Activated T-helper 2 cell treated with anti-CD3 and anti-CD28 coated beads, Interferon-gamma antibody, Interleukin-2, Interleukin-4, amounts not matched to agents 10 μg/mL and 5 μg/mL and 100 μg/mL, durations not matched to agents 14 hours and 24 hours and 36 hours (primary cell): ENCODE measurements at regions of chr17 and their contacts with region 1.

Region 1: GRCh38 chr17:18038861-18039534 is at the starts of genes ATPAF2 and GID4:
- DNase-seq: peak; percentile 100
- H3K4me3 Mint-ChIP-seq: peak within 1 kb of the TSS; percentile 92
- H3K27ac Mint-ChIP-seq: peak within 1 kb of the TSS; percentile 87
- H3K4me1 Mint-ChIP-seq: peaks cover 34% of the 10 kb centered on the region
- H3K27me3 Mint-ChIP-seq: no peaks in the 10 kb centered on the region
- total RNA-seq, gene ATPAF2: 29.9 and 31.3 TPM in 2 replicates
- total RNA-seq, gene GID4: 9.3 and 10.8 TPM in 2 replicates

Region 2: DNA sequence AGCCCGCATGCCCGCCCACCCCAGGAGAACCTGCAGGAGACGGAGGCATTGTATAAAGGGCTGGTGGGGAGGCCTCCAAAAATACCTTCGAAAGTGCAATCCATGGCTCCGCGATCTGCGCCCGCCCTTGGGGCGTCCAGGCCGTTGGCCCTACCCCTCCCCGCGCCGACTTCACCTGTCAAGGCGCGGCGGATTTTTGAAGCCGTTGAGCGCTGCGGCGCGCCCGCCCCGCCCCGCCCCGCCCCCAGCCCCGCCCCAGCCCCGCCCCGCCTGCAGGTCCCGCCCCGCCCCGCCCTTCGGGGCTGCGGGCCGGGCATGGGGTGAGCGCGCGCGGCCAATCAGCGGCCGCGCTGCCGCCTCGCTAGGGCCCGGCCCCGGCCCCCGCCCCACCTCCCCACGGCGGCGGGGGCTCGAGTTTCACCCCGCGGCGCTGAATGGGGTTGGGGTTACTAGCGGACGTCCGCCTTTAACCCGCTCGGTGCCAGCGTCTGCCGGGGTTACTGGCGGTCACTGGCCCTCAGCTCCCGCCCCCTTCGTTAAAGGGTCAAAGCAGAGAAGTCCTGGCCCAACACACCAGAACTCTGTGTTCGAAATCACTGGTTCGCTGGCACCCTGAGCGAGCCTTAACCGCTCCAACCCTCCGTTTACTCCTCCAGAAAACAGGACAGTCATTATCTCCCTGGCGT is 215.4 kb before region 1 on chr17:
- intact Hi-C with region 1: loop called (anchors 5 kb)
- DNase-seq: peak; percentile 82
- H3K4me3 Mint-ChIP-seq: peak overlapping the region; percentile 77
- H3K27ac Mint-ChIP-seq: peak overlapping the region; percentile 94
- H3K4me1 Mint-ChIP-seq: peaks cover 81% of the 10 kb centered on the region
- H3K27me3 Mint-ChIP-seq: no peaks in the 10 kb centered on the region

Region 3: DNA sequence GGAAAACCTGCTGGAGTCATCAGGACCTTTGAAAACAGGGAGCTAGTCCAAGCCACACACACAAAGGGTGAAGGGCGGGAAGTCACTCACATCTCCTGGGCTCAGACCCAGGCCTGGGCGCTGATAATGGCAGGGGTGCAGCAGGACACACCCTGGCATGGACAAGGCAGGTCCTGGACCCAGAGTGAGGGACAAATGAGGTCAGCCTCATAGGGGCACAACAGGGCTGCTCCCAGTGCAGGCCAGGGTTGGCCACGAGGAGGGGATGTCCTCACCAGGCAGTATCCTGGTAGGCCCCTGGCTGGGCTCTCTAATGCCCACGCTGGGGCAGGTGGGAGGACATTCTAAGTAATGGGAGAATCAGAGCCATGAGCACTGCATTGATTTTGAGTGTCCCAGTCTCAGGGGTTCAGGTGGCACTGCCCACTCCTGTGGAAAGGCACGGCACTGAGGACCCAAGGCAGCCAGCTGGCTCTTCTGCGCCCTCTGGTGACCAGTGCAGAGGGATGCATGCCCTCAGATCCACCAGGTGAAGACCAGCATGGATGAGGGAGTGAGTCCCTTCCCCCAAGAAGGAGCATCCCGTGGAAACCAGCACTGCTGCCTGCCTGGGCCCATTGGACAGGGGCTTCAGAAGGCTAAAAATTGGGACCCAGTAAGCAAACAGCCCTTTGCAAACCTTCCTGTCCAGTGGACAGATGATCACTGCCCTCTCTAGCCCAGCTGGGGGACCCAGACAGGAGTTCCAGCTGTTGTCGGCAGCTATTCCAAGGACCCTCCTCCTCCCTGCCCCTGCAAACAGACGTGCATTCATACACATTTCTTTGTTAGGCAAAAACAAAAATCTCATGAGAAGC is 178.9 kb before region 1 on chr17:
- intact Hi-C with region 1: loop called (anchors 10 kb)
- DNase-seq: peak; percentile 50
- H3K4me3 Mint-ChIP-seq: no peak overlapping the region
- H3K27ac Mint-ChIP-seq: no peak overlapping the region
- H3K4me1 Mint-ChIP-seq: peaks cover 20% of the 10 kb centered on the region
- H3K27me3 Mint-ChIP-seq: no peaks in the 10 kb centered on the region

Region 4: GRCh38 chr17:17959520-17960361 is 79.3 kb before region 1 on chr17:
- intact Hi-C with region 1: loop called (anchors 5 kb)
- DNase-seq: no peak
- H3K4me3 Mint-ChIP-seq: peak overlapping the region; percentile 86
- H3K27ac Mint-ChIP-seq: peak overlapping the region; percentile 99
- H3K4me1 Mint-ChIP-seq: peaks cover 52% of the 10 kb centered on the region
- H3K27me3 Mint-ChIP-seq: no peaks in the 10 kb centered on the region

Region 5: GRCh38 chr17:17972126-17972951 is 66.7 kb before region 1 on chr17 and contains the starts of genes DRC3 and TOM1L2:
- intact Hi-C with region 1: loop called (anchors 1 kb)
- DNase-seq: peak; percentile 100
- H3K4me3 Mint-ChIP-seq: peak within 1 kb of the TSS; percentile 91
- H3K27ac Mint-ChIP-seq: peak within 1 kb of the TSS; percentile 80
- H3K4me1 Mint-ChIP-seq: peaks cover 27% of the 10 kb centered on the region
- H3K27me3 Mint-ChIP-seq: no peaks in the 10 kb centered on the region
- total RNA-seq, gene DRC3: not detected in 2 replicates
- total RNA-seq, gene TOM1L2: 9.4 and 13.4 TPM in 2 replicates

Region 6: GRCh38 chr17:18087610-18088491 is 48.9 kb after region 1 on chr17 and contains the start of gene DRG2:
- intact Hi-C with region 1: loop called (anchors 5 kb)
- DNase-seq: peak; percentile 85
- H3K4me3 Mint-ChIP-seq: peak within 1 kb of the TSS; percentile 100
- H3K27ac Mint-ChIP-seq: peak within 1 kb of the TSS; percentile 97
- H3K4me1 Mint-ChIP-seq: peaks cover 17% of the 10 kb centered on the region
- H3K27me3 Mint-ChIP-seq: no peaks in the 10 kb centered on the region
- total RNA-seq, gene DRG2: 57.9 and 62.2 TPM in 2 replicates